ENCODE measurements at regions of chr17 and their contacts with region 1.

Region 1: DNA sequence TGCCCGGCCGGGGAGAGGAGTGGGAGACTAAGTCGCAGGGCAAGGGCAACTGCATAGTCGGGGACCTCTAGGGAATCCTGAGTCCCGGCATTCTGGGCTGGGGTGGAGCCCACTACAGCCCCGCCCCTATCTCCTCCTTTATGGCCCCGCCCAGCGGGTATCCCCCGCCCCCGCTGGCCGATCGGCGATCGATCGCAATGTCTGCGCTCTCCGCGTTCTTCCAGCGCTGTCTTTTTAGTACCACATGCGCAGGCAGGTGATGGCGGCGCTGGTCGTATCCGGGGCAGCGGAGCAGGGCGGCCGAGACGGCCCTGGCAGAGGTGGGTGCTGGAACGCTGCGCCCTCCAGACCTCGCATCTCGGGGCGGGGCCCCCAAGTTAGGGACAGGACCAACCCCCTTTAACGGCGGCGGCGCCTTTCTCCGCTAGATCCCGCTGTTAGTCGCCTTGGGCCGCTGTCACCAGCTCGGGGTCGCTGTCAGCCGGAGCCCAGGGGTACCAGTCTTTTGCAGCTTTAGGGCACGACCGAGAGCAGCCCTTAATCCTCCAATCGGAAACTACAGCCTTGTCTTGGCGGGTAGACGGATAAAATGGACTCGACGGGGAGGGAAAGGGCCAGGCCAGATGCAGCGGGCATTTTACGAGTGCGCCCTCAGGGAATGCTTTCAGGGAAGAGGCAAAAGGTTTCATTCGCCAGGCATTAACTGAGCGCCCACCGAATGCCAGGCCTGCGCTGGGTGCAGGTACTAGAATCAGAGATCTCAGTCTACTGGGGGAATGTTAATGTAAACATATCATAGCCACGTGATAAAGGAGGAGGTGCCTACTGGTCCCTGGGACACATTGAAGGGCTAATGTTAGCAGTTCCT is at the start of gene DPH1:
- H3K4me3 ChIP-seq: peak within 1 kb of the TSS; percentile 97
- H3K27ac ChIP-seq: peak within 1 kb of the TSS; percentile 84
- H3K4me1 ChIP-seq: peaks cover 5% of the 10 kb centered on the region
- CTCF ChIP-seq: no peak; the same call in 1 of the 2 replicates

Region 2: GRCh38 chr17:1882836-1883235 is 147.3 kb before region 1 on chr17:
- CTCF ChIA-PET with region 1: interaction called, 20 read pairs
- POLR2A ChIA-PET with region 1: no interaction called
- H3K4me3 ChIP-seq: no peak overlapping the region
- H3K27ac ChIP-seq: no peak overlapping the region
- H3K4me1 ChIP-seq: no peaks in the 10 kb centered on the region
- CTCF ChIP-seq: 0 out of 2 replicates have a peak, but pooled peaks have one; percentile 18

Region 3: DNA sequence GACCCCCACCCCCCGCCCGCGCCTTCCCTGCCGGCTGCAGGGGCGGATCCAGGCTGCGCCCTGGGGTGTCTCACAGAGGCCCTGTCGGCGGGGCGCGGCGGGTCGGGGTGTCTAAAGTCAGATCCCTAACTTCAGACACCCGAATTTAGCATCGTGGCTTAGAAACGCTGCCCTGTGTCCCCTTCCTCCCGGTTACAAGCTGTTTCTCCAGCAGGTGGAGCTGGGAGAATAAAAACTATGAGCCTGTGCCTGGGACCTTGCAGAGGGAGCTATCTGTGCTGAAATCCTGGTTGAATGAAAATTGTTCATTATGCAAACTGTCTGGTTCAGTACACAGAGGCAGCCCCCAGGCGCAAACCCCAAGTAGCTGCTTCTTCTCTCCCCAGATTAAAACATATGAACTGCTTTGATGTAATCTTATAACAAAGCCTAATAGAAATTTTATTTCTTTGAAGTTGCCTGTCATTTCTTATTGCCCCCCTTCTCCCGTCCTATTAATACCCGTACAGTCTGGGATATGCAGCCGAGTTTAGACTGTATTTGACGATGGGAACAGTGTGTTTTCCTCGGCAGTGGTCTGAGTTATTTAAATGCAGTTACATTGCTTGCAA is 121.3 kb before region 1 on chr17:
- CTCF ChIA-PET with region 1: interaction called, 145 read pairs
- POLR2A ChIA-PET with region 1: interaction called, 19 read pairs
- H3K4me3 ChIP-seq: no peak overlapping the region
- H3K27ac ChIP-seq: no peak overlapping the region
- H3K4me1 ChIP-seq: peaks cover 16% of the 10 kb centered on the region
- CTCF ChIP-seq: peak; percentile 59

Region 4: DNA sequence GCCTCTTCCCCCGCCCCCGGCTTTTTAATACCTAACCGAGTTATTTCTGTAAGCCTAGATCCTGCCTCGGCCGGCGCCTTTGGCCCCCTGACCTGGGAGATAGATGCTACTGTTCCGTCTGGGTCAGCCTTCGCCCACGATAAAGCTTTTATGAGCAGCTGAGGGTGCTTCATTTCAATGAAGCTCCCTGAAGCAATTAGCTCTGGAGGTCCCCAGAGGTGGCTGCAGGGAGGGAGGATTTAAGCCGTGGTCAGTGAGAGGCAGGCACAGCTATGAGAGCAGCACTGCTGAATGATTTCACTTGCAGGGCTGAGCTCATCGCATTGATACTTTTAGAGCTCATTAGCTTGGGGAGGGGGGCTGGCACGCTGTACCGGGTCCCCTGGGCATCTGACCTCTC is 110.9 kb before region 1 on chr17:
- CTCF ChIA-PET with region 1: interaction called, 11 read pairs
- POLR2A ChIA-PET with region 1: no interaction called
- H3K4me3 ChIP-seq: no peak overlapping the region
- H3K27ac ChIP-seq: no peak overlapping the region
- H3K4me1 ChIP-seq: no peaks in the 10 kb centered on the region
- CTCF ChIP-seq: no peak

Region 5: GRCh38 chr17:1967213-1967612 is 62.9 kb before region 1 on chr17:
- CTCF ChIA-PET with region 1: interaction called, 3 read pairs
- POLR2A ChIA-PET with region 1: interaction called, 10 read pairs
- H3K4me3 ChIP-seq: no peak overlapping the region
- H3K27ac ChIP-seq: no peak overlapping the region
- H3K4me1 ChIP-seq: no peaks in the 10 kb centered on the region; the same call in 1 of the 2 replicates
- CTCF ChIP-seq: no peak

Region 6: DNA sequence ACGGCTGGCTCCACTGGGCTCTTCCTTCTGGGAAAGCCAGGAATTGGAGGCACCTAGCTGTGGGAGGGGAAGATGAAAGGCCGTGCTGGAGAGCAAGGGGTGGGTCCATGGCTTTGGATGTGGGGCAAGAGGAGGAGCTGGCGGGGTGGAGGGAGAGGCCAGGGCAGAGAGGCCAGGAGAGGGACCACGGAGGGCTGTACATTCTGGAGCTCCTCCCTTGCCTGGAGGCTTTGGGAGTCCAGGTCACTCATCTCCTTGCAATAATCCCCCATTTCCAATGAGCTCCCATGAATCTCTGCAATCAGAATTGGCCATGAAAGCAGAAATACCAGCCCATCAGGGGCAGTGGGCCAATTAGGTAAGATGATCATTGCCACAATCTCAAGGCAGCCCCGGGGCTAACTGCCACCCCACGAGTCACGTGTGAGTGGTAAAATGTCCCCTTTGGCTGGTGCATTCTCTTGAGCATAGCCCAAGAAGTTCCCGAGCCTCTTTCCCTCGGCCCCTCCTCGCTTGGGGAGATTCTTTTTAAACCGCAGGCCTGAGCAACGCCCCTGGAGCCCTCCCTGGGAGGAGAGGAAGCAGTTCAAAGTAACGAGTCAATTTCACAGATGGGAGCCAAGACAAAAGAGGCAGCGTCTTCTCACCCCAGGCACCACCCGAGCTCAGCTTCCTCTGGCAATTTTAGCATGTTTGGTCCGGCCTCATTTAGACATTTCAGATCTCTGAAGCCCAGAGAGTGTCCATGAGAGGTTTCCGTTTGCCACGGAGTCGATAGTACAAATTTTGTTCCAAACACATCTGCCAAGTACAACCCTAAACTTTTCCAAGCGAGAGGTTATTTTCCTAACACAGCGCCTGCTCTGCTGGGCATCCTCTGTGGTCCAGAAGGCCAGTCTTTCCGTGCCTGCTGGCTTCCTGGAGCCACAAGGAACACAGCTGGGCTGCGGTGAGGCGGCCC is 18.5 kb before region 1 on chr17:
- CTCF ChIA-PET with region 1: interaction called, 25 read pairs
- POLR2A ChIA-PET with region 1: interaction called, 12 read pairs
- H3K4me3 ChIP-seq: no peak overlapping the region
- H3K27ac ChIP-seq: no peak overlapping the region
- H3K4me1 ChIP-seq: no peaks in the 10 kb centered on the region; the same call in 1 of the 2 replicates
- CTCF ChIP-seq: no peak

Region 7: GRCh38 chr17:2041561-2042366 is 11.6 kb after region 1 on chr17 and contains the start of gene OVCA2:
- CTCF ChIA-PET with region 1: interaction called, 12 read pairs
- POLR2A ChIA-PET with region 1: interaction called, 7 read pairs
- H3K4me3 ChIP-seq: peak within 1 kb of the TSS; percentile 70
- H3K27ac ChIP-seq: peak within 1 kb of the TSS; percentile 81
- H3K4me1 ChIP-seq: peaks cover 6% of the 10 kb centered on the region
- CTCF ChIP-seq: peak; percentile 88

Region 8: GRCh38 chr17:2137342-2138098 is 107.4 kb after region 1 on chr17:
- CTCF ChIA-PET with region 1: no interaction called
- POLR2A ChIA-PET with region 1: no interaction called
- H3K4me3 ChIP-seq: no peak overlapping the region
- H3K27ac ChIP-seq: peak overlapping the region; percentile 37
- H3K4me1 ChIP-seq: peaks cover 25% of the 10 kb centered on the region
- CTCF ChIP-seq: no peak